ENCODE measurements at regions of chr17 and their contacts with region 1.

Region 1: GRCh38 chr17:36591434-36592315 is at the start of gene DHRS11:
- DNase-seq: peak; percentile 87
- H3K4me3 Mint-ChIP-seq: peak within 1 kb of the TSS; percentile 69
- H3K27ac Mint-ChIP-seq: peak within 1 kb of the TSS; percentile 49
- H3K4me1 Mint-ChIP-seq: peaks cover 28% of the 10 kb centered on the region
- H3K27me3 Mint-ChIP-seq: no peaks in the 10 kb centered on the region
- total RNA-seq, gene DHRS11: 10.2 to 10.5 TPM

Region 2: GRCh38 chr17:36486204-36487194 is 105.2 kb before region 1 on chr17 and contains the start of gene ZNHIT3:
- CTCF ChIA-PET with region 1: no interaction called
- POLR2A ChIA-PET with region 1: no interaction called
- intact Hi-C with region 1: loop called (anchors 5 kb)
- DNase-seq: peak; percentile 96
- H3K4me3 Mint-ChIP-seq: peak within 1 kb of the TSS; percentile 94
- H3K27ac Mint-ChIP-seq: peak within 1 kb of the TSS; percentile 93
- H3K4me1 Mint-ChIP-seq: peaks cover 48% of the 10 kb centered on the region
- H3K27me3 Mint-ChIP-seq: peaks cover 13% of the 10 kb centered on the region
- total RNA-seq, gene ZNHIT3: 41.6 to 45.2 TPM

Region 3: DNA sequence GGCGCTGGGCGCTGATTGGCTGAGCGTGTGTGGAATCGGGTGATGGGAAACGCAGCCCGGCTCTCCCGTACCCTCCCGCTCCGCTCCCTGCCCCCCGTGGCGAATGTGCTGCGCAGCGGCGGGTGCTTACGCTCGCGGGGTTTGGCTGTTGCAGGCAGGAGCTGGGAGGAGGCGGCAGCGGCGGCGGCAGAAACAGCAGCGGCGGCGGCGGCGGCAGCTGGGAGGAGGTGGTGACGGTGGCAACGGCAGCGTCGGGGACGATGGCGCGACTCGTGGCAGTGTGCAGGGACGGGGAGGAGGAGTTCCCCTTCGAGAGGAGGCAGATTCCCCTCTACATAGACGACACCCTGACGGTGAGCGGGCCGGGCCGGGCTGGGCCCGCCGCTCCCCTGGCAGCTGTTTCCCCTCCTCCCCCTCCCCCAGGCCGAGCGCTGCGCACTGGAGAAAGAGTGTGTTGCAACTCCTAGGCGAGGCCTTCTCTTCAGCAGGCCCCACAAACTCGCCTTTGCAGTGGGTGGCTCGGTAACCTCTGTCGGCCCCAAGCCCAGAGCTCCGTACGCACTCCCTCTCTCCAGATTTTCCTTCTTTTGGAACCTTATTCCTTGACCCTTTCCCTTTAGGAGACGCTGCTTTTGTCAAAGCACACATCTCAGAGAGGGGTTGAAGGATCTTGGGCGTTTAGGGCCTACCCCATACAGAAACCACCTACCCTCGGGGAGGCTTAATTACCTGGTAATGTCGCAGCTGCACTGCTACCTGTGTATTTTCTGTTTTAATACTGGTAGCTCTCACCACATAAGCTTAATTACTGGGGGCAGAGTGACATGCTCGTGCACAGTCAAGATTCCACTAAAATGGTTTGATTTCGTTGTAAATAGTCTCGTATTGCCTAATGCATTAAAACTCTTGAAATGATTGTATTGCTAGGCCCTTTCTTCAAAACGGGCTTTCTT is 45.9 kb before region 1 on chr17:
- CTCF ChIA-PET with region 1: no interaction called
- POLR2A ChIA-PET with region 1: interaction called, 4 read pairs
- intact Hi-C with region 1: loop called (anchors 2 kb)
- DNase-seq: peak; percentile 98
- H3K4me3 Mint-ChIP-seq: peak overlapping the region; percentile 90
- H3K27ac Mint-ChIP-seq: peak overlapping the region; percentile 98
- H3K4me1 Mint-ChIP-seq: peaks cover 40% of the 10 kb centered on the region
- H3K27me3 Mint-ChIP-seq: no peaks in the 10 kb centered on the region

Region 4: DNA sequence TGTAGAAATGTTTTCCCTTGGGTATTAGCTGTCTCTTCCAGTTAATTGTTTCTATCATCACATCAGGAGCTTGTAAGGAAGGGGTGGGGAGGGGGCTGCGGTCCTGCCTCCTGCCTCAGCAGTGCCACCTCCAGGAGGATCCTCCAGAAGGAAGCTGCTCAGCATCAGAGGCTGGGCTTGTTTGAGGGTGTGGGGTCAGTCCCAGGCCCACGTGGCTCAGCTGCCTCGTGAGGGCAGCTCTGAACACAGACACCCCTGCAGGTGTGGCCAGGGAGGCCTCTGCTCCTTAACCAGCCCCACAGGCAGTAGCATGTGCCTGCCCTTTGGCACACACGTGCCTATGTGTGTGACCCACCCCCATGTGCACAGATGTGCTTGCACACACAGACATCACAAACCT is 56.0 kb after region 1 on chr17:
- CTCF ChIA-PET with region 1: no interaction called
- POLR2A ChIA-PET with region 1: no interaction called
- intact Hi-C with region 1: no loop called
- DNase-seq: no peak
- H3K4me3 Mint-ChIP-seq: no peak overlapping the region
- H3K27ac Mint-ChIP-seq: no peak overlapping the region
- H3K4me1 Mint-ChIP-seq: peaks cover 4% of the 10 kb centered on the region
- H3K27me3 Mint-ChIP-seq: peaks cover 49% of the 10 kb centered on the region

Region 5: DNA sequence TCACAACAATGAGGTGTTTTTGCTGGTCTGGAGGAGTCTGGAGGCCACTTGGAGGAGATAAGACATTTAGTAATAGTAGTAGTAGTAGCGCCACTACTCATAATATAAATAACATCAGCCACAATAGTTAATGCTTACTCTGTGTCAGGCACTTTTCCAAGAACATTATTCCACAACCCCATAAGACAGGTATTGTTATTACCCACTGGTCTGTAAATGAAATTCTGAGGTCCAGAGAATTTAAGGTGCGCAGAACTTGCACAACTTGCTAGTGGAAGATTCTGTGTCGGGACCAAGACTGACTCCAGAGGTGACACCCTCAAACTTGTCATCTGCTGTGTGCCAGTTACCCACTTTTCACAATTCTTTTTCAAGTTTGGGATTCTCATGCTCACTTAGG is 116.2 kb after region 1 on chr17:
- CTCF ChIA-PET with region 1: no interaction called
- POLR2A ChIA-PET with region 1: no interaction called
- intact Hi-C with region 1: no loop called
- DNase-seq: no peak
- H3K4me3 Mint-ChIP-seq: no peak overlapping the region
- H3K27ac Mint-ChIP-seq: no peak overlapping the region
- H3K4me1 Mint-ChIP-seq: no peaks in the 10 kb centered on the region
- H3K27me3 Mint-ChIP-seq: peaks cover 16% of the 10 kb centered on the region